ENCODE measurements at regions of chr13 and their contacts with region 1.

Region 1: GRCh38 chr13:78478183-78478582 is 125.2 kb downstream of the POU4F1 start:
- DNase-seq: no peak
- ATAC-seq: no peak
- H3K4me3 ChIP-seq: no peak overlapping the region
- H3K27ac ChIP-seq: no peak overlapping the region
- H3K4me1 ChIP-seq: no peaks in the 10 kb centered on the region
- H3K27me3 ChIP-seq: no peaks in the 10 kb centered on the region
- CTCF ChIP-seq: no peak
- EP300 ChIP-seq: no peak
- POLR2A ChIP-seq: no peak
- RAD21 ChIP-seq: no peak

Region 2: GRCh38 chr13:78491978-78492377 is 13.8 kb after region 1 on chr13:
- CTCF ChIA-PET with region 1: no interaction called
- POLR2A ChIA-PET with region 1: no interaction called
- in situ Hi-C with region 1: no loop called
- intact Hi-C with region 1: loop called (anchors 1 kb)
- DNase-seq: no peak
- ATAC-seq: no peak
- H3K4me3 ChIP-seq: no peak overlapping the region
- H3K27ac ChIP-seq: no peak overlapping the region
- H3K4me1 ChIP-seq: no peaks in the 10 kb centered on the region
- H3K27me3 ChIP-seq: no peaks in the 10 kb centered on the region
- CTCF ChIP-seq: no peak
- EP300 ChIP-seq: no peak
- POLR2A ChIP-seq: no peak
- RAD21 ChIP-seq: no peak

Measured in K562 (cell line).